Activated CD8-positive, alpha-beta T cell treated with anti-CD3 and anti-CD28 coated beads, Interleukin-2, amount 10 ng/mL, durations not matched to agents 7 days and 5 days (primary cell): ENCODE measurements at regions of chr2 and their contacts with region 1.

Region 1: DNA sequence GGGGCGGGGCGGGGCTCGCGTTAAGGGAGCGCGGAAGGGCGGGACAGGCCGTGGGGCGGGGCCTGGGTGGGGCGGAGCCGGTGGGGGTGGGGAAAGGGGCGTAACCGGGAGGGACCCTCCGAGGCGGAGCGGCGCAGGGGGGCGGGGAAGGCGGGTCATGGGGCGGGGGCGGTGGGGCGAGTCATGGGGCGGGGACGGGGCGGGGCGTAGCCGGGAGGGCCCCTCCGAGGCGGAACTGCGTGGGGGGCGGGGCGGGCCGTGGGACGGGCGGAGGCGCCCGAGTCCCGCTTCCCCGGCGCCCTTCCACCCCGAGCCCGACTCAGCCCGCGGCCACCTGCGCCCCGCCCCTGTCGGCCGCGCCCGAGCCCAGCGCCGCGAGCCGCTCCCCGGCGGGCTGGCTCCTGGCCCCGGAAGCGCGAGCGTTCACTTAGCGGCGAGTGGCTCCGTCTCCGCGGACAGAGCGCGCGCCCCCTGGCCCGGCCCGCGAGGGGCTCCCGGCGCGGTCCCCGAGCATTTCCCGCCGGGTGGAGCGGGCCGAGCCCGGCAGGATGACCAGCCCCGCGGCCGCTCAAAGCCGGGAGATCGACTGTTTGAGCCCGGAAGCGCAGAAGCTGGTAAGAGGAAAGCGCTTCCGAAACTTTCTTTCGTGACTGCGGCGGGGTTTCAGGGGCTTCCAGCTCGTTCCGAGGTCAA is 64.7 kb downstream of the LRRFIP1 start:
- DNase-seq: peak; percentile 95
- ATAC-seq: peak; percentile 70
- H3K4me3 Mint-ChIP-seq: peak overlapping the region; percentile 93
- H3K27ac Mint-ChIP-seq: peak overlapping the region; percentile 93
- H3K4me1 Mint-ChIP-seq: peaks cover 55% of the 10 kb centered on the region
- H3K27me3 Mint-ChIP-seq: no peaks in the 10 kb centered on the region

Region 2: GRCh38 chr2:237483040-237483721 is 208.9 kb before region 1 on chr2:
- CTCF ChIA-PET with region 1: no interaction called
- POLR2A ChIA-PET with region 1: no interaction called
- DNase-seq: no peak
- ATAC-seq: no peak
- H3K4me3 Mint-ChIP-seq: no peak overlapping the region
- H3K27ac Mint-ChIP-seq: no peak overlapping the region
- H3K4me1 Mint-ChIP-seq: no peaks in the 10 kb centered on the region
- H3K27me3 Mint-ChIP-seq: peaks cover 43% of the 10 kb centered on the region

Region 3: DNA sequence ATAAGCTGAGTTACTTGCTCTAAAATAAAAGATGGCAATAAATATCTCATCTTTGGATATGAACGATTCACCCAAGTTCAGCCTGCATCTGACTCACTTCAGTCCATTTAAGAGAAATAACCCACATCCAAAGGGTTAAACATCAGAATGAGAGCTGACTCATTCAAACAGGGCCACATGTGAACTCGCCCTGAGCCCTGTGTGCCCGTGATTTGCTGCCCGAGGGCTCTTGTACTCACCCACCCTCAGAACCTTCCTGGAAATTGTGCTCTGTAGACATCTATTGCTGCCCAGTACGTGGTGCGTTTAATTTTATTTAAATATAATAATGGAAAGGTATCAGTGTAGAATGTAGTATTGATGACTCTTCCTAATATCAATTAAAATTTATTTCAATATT is 39.6 kb after region 1 on chr2:
- CTCF ChIA-PET with region 1: interaction called, 4 read pairs
- POLR2A ChIA-PET with region 1: interaction called, 15 read pairs
- DNase-seq: no peak
- ATAC-seq: peak; percentile 34
- H3K4me3 Mint-ChIP-seq: no peak overlapping the region
- H3K27ac Mint-ChIP-seq: peak overlapping the region; percentile 60
- H3K4me1 Mint-ChIP-seq: peaks cover 37% of the 10 kb centered on the region
- H3K27me3 Mint-ChIP-seq: no peaks in the 10 kb centered on the region